ENCODE measurements at regions of chr2 and their contacts with region 1.

Region 1: DNA sequence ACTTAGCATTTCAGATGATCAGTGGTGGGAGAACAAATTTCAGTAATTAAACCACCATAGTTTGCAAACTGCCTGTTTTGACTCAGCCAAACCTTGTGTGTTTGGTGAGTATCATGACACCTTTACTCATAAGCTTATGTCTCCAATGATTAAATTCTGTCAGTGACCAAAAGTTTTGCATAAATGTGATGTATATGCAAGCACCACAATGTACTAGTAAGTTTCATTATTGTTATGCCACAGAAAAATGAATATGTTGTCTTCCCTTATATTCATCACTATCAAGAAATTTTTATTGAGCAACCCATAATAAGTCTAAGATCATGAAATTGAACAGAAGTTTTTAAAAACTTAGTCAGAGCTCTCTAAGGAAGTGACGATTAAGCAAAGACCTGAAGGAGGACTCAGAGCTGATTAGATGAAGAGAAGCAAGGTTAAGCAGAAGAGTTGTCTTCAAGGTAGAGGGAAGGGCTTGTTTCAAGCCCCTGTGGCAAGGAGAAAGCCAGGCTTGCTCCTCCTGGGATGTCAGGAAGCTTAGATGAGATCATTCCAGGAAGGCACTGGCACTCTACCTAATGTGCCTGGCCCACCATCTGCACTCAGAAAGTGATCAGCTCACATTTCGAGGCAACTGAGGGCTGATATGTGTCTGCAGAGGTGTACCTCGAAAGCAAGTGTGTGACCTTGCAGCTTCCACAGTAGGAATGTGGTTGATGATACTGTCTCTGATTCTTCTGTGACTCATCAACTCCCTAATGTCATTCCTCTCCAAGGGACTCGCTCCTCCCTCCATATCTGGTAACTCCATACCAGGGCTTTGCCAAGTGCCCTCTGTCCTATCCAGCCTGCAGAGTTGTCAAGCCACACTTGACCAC is 54.7 kb downstream of the KCTD18 start:
- DNase-seq: peak; percentile 41
- ATAC-seq: peak; percentile 78
- H3K4me3 Mint-ChIP-seq: peak overlapping the region; percentile 10
- H3K27ac Mint-ChIP-seq: peak overlapping the region; percentile 96
- H3K4me1 Mint-ChIP-seq: peaks cover 33% of the 10 kb centered on the region
- H3K27me3 Mint-ChIP-seq: no peaks in the 10 kb centered on the region

Region 2: GRCh38 chr2:200335662-200336061 is 119.5 kb before region 1 on chr2:
- CTCF ChIA-PET with region 1: no interaction called
- POLR2A ChIA-PET with region 1: no interaction called
- intact Hi-C with region 1: no loop called
- DNase-seq: no peak
- ATAC-seq: no peak
- H3K4me3 Mint-ChIP-seq: no peak overlapping the region
- H3K27ac Mint-ChIP-seq: no peak overlapping the region
- H3K4me1 Mint-ChIP-seq: no peaks in the 10 kb centered on the region
- H3K27me3 Mint-ChIP-seq: no peaks in the 10 kb centered on the region

Region 3: GRCh38 chr2:200373973-200374416 is 81.2 kb before region 1 on chr2:
- CTCF ChIA-PET with region 1: interaction called, 5 read pairs
- POLR2A ChIA-PET with region 1: no interaction called
- intact Hi-C with region 1: loop called (anchors 1 kb)
- DNase-seq: peak; percentile 57
- ATAC-seq: peak; percentile 92
- H3K4me3 Mint-ChIP-seq: peak overlapping the region; percentile 67
- H3K27ac Mint-ChIP-seq: peak overlapping the region; percentile 79
- H3K4me1 Mint-ChIP-seq: peaks cover 46% of the 10 kb centered on the region
- H3K27me3 Mint-ChIP-seq: no peaks in the 10 kb centered on the region

Region 4: GRCh38 chr2:200383383-200384110 is 71.6 kb before region 1 on chr2:
- CTCF ChIA-PET with region 1: no interaction called
- POLR2A ChIA-PET with region 1: no interaction called
- intact Hi-C with region 1: loop called in 1 of 2 experiments (anchors 2 kb)
- DNase-seq: no peak
- ATAC-seq: peak; percentile 84
- H3K4me3 Mint-ChIP-seq: no peak overlapping the region
- H3K27ac Mint-ChIP-seq: peak overlapping the region; percentile 90
- H3K4me1 Mint-ChIP-seq: peaks cover 24% of the 10 kb centered on the region
- H3K27me3 Mint-ChIP-seq: no peaks in the 10 kb centered on the region

Region 5: GRCh38 chr2:200405599-200406298 is 49.4 kb before region 1 on chr2:
- CTCF ChIA-PET with region 1: no interaction called
- POLR2A ChIA-PET with region 1: no interaction called
- intact Hi-C with region 1: loop called (anchors 2 to 5 kb)
- DNase-seq: no peak
- ATAC-seq: peak; percentile 99
- H3K4me3 Mint-ChIP-seq: no peak overlapping the region
- H3K27ac Mint-ChIP-seq: peak overlapping the region; percentile 45
- H3K4me1 Mint-ChIP-seq: peaks cover 29% of the 10 kb centered on the region
- H3K27me3 Mint-ChIP-seq: no peaks in the 10 kb centered on the region

Region 6: GRCh38 chr2:200525882-200526651 is 70.9 kb after region 1 on chr2 and contains the start of gene SGO2:
- CTCF ChIA-PET with region 1: no interaction called
- POLR2A ChIA-PET with region 1: no interaction called
- intact Hi-C with region 1: loop called in 1 of 2 experiments (anchors 1 kb)
- DNase-seq: peak; percentile 98
- ATAC-seq: peak; percentile 99
- H3K4me3 Mint-ChIP-seq: peak within 1 kb of the TSS; percentile 97
- H3K27ac Mint-ChIP-seq: peak within 1 kb of the TSS; percentile 90
- H3K4me1 Mint-ChIP-seq: peaks cover 23% of the 10 kb centered on the region
- H3K27me3 Mint-ChIP-seq: no peaks in the 10 kb centered on the region
- total RNA-seq, gene SGO2: 49.9 to 56.7 TPM

Region 7: DNA sequence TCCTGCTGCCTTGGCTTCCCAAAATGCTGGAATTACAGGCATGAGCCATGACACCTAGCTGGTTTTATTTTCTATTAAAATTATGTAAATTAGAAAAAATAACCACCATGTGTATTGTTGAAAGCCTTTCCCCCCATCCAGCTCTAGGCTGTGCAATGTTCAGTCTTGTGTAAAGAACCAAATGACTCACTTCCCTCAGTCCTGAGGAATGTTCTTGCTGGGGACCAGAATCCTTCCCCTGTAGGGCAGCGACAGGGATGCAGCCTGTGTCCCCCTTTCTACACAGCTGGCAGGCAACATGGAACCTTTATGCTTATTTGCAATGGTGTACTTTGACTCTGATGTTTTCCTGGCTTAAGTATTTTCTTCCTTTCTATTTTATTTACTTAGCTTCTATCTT is 160.1 kb after region 1 on chr2:
- CTCF ChIA-PET with region 1: no interaction called
- POLR2A ChIA-PET with region 1: no interaction called
- intact Hi-C with region 1: no loop called
- DNase-seq: no peak
- ATAC-seq: no peak
- H3K4me3 Mint-ChIP-seq: no peak overlapping the region
- H3K27ac Mint-ChIP-seq: no peak overlapping the region
- H3K4me1 Mint-ChIP-seq: peaks cover 15% of the 10 kb centered on the region
- H3K27me3 Mint-ChIP-seq: peaks cover 11% of the 10 kb centered on the region

Region 8: GRCh38 chr2:200787348-200788120 is 332.4 kb after region 1 on chr2:
- CTCF ChIA-PET with region 1: no interaction called
- POLR2A ChIA-PET with region 1: no interaction called
- intact Hi-C with region 1: no loop called
- DNase-seq: peak; percentile 32
- ATAC-seq: peak; percentile 83
- H3K4me3 Mint-ChIP-seq: no peak overlapping the region
- H3K27ac Mint-ChIP-seq: peak overlapping the region; percentile 4
- H3K4me1 Mint-ChIP-seq: peaks cover 13% of the 10 kb centered on the region
- H3K27me3 Mint-ChIP-seq: peaks cover 5% of the 10 kb centered on the region

Measured in activated CD4-positive, alpha-beta T cell treated with anti-CD3 and anti-CD28 coated beads for 36 hours (primary cell).